IMR-90 (cell line): ENCODE measurements at regions of chr10 and their contacts with region 1.

Region 1: GRCh38 chr10:88386821-88387773 is 196.0 kb downstream of the RNLS start:
- DNase-seq: peak; percentile 82
- ATAC-seq: peak; percentile 91
- H3K4me3 ChIP-seq: no peak overlapping the region
- H3K27ac ChIP-seq: no peak overlapping the region; the same call in 1 of the 2 replicates
- H3K4me1 ChIP-seq: peaks cover 2% of the 10 kb centered on the region; the same call in 1 of the 2 replicates
- H3K27me3 ChIP-seq: no peaks in the 10 kb centered on the region
- CTCF ChIP-seq: no peak
- POLR2A ChIP-seq: no peak
- RAD21 ChIP-seq: no peak

Region 2: DNA sequence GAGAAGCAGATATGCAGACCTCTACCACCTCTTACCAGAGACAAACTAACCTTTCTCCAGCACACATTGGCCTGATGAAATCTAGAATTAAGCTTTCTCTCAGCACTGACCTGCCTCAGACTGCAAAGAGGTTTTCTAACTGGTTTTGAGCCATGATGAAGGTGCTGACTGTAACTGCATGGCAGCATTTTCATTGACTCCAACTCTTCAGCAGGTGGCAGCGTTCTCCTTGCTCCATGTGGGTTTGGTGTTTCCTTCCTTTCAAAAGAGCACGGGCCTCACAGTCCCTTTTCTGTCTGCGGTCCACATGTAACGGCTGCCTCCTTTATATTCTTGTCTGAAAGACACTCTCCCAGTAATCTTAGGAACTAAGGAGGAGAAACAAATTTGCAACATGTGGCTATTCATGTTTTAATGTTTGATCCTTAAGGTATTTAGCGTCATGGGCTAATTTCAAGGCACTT is 536.3 kb before region 1 on chr10:
- CTCF ChIA-PET with region 1: interaction called, 9 read pairs
- POLR2A ChIA-PET with region 1: no interaction called
- dilution Hi-C with region 1: no loop called
- in situ Hi-C with region 1: no loop called
- intact Hi-C with region 1: loop called (anchors 1 kb)
- DNase-seq: peak; percentile 70
- ATAC-seq: peak; percentile 81
- H3K4me3 ChIP-seq: no peak overlapping the region
- H3K27ac ChIP-seq: no peak overlapping the region
- H3K4me1 ChIP-seq: no peaks in the 10 kb centered on the region; the same call in 1 of the 2 replicates
- H3K27me3 ChIP-seq: no peaks in the 10 kb centered on the region
- CTCF ChIP-seq: peak; percentile 71
- POLR2A ChIP-seq: no peak
- RAD21 ChIP-seq: peak; percentile 86

Region 3: GRCh38 chr10:87868277-87868676 is 518.8 kb before region 1 on chr10:
- CTCF ChIA-PET with region 1: interaction called, 3 read pairs
- POLR2A ChIA-PET with region 1: interaction called, 3 read pairs
- dilution Hi-C with region 1: no loop called
- in situ Hi-C with region 1: loop called (anchors 5 kb)
- intact Hi-C with region 1: loop called (anchors 1 kb)
- DNase-seq: no peak
- ATAC-seq: no peak
- H3K4me3 ChIP-seq: peak overlapping the region; percentile 24; the same call in 1 of the 2 replicates
- H3K27ac ChIP-seq: no peak overlapping the region
- H3K4me1 ChIP-seq: peaks cover 2% of the 10 kb centered on the region
- H3K27me3 ChIP-seq: no peaks in the 10 kb centered on the region
- CTCF ChIP-seq: no peak
- POLR2A ChIP-seq: no peak
- RAD21 ChIP-seq: no peak

Region 4: DNA sequence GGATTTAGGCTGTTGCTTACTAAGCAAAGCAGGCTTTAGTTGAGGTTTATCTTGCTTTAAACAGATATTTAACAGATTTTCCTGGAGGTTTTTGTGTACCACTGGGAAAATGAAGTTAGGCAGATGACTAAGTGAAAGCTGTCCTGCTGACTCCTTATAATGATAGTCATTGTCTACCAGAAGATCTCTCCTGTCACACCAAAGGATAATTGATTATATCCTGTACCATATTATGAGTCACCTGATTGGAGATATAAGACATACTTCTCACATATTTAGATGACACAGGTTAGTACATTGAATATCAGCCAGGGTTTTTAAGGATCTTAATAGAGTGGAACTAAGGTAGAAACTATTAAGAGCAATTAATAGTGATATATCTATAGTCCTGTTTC is 455.3 kb before region 1 on chr10:
- CTCF ChIA-PET with region 1: no interaction called
- POLR2A ChIA-PET with region 1: no interaction called
- dilution Hi-C with region 1: no loop called
- in situ Hi-C with region 1: no loop called
- intact Hi-C with region 1: loop called (anchors 5 kb)
- DNase-seq: peak; percentile 60
- ATAC-seq: 0 out of 2 replicates have a peak, but pooled peaks have one; percentile 9
- H3K4me3 ChIP-seq: no peak overlapping the region
- H3K27ac ChIP-seq: no peak overlapping the region
- H3K4me1 ChIP-seq: peaks cover 3% of the 10 kb centered on the region; the same call in 1 of the 2 replicates
- H3K27me3 ChIP-seq: no peaks in the 10 kb centered on the region
- CTCF ChIP-seq: no peak
- POLR2A ChIP-seq: no peak
- RAD21 ChIP-seq: no peak

Region 5: DNA sequence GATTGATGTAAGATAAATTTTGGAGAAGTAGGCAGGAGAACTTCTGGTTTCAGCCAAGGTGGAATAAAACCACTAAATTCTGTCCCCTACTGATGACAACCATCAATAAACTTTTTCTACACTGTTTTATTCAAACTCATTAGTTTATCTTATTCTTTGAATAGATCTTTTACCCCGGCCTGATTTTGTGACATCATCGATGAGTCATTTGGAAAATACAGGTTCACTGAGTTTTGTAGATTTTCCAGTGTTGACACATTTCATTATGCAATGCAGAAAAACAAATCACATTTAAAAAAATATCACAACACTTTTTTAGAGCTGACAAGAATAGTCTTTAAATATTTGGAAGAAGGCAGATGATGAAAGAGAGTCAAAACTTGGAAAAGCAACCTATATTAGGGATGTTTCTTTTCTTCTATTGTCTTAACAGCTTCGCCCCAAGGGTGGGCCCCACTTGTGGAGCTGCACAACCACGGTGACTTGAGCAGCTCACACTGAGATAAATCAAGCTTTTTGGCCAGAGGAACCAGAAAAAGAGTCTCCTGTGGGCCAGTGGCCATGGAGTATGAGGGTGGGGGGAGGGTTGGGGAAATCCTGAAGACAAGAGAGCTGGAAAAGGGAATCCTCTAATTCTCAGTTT is 410.9 kb before region 1 on chr10:
- CTCF ChIA-PET with region 1: no interaction called
- POLR2A ChIA-PET with region 1: no interaction called
- dilution Hi-C with region 1: no loop called
- in situ Hi-C with region 1: no loop called
- intact Hi-C with region 1: loop called (anchors 10 kb)
- DNase-seq: peak; percentile 42
- ATAC-seq: no peak
- H3K4me3 ChIP-seq: no peak overlapping the region
- H3K27ac ChIP-seq: no peak overlapping the region
- H3K4me1 ChIP-seq: peaks cover 3% of the 10 kb centered on the region; the same call in 1 of the 2 replicates
- H3K27me3 ChIP-seq: no peaks in the 10 kb centered on the region; the same call in 1 of the 2 replicates
- CTCF ChIP-seq: no peak
- POLR2A ChIP-seq: no peak
- RAD21 ChIP-seq: no peak

Region 6: DNA sequence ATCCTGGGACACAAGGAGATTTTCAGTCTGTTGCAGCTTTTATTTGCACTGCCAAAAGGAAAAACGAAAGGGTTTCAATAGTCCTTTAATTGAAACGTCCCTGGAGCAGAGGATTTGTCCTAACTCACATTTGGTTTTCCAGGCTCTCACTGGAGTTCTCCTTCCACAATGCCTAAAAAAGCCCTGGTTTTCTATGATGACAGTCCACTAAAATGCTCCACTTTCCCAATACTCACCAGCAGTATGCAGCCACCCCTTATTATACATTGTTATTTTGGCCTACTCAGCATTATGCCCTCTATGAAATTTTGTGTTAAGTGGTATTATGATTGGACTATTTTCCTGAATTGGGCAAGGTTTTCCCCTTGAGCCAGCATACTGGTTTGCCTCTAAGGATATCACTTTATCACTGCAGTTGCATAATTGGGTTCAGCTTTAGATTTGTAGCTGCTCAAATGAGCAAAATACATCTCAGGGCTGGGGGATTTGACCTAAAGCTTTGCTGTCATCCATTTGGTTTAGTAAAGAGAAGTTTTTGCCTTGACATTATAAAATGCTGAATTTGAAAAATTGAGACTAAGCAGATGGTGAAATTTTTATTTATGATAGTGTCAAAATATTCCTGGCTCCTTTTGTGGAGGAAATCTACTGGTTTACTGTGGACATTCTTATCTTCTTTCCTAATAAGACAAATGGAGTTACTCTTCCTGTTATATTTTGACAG is 43.2 kb before region 1 on chr10:
- CTCF ChIA-PET with region 1: no interaction called
- POLR2A ChIA-PET with region 1: interaction called, 19 read pairs
- dilution Hi-C with region 1: no loop called
- in situ Hi-C with region 1: no loop called
- intact Hi-C with region 1: no loop called
- DNase-seq: no peak
- ATAC-seq: no peak
- H3K4me3 ChIP-seq: no peak overlapping the region
- H3K27ac ChIP-seq: no peak overlapping the region
- H3K4me1 ChIP-seq: no peaks in the 10 kb centered on the region
- H3K27me3 ChIP-seq: peaks cover 2% of the 10 kb centered on the region; the same call in 1 of the 2 replicates
- CTCF ChIP-seq: no peak
- POLR2A ChIP-seq: no peak
- RAD21 ChIP-seq: no peak

Region 7: GRCh38 chr10:88553116-88553752 is 166.1 kb after region 1 on chr10:
- CTCF ChIA-PET with region 1: no interaction called
- POLR2A ChIA-PET with region 1: no interaction called
- dilution Hi-C with region 1: no loop called
- in situ Hi-C with region 1: no loop called
- intact Hi-C with region 1: loop called (anchors 1 kb)
- DNase-seq: peak; percentile 84
- ATAC-seq: peak; percentile 96
- H3K4me3 ChIP-seq: no peak overlapping the region
- H3K27ac ChIP-seq: no peak overlapping the region
- H3K4me1 ChIP-seq: no peaks in the 10 kb centered on the region; the same call in 1 of the 2 replicates
- H3K27me3 ChIP-seq: no peaks in the 10 kb centered on the region
- CTCF ChIP-seq: peak; percentile 79
- POLR2A ChIP-seq: no peak
- RAD21 ChIP-seq: peak; percentile 88